Uterus (tissue), 4 donors: ENCODE measurements at regions of chr4 and their contacts with region 1.

Region 1: DNA sequence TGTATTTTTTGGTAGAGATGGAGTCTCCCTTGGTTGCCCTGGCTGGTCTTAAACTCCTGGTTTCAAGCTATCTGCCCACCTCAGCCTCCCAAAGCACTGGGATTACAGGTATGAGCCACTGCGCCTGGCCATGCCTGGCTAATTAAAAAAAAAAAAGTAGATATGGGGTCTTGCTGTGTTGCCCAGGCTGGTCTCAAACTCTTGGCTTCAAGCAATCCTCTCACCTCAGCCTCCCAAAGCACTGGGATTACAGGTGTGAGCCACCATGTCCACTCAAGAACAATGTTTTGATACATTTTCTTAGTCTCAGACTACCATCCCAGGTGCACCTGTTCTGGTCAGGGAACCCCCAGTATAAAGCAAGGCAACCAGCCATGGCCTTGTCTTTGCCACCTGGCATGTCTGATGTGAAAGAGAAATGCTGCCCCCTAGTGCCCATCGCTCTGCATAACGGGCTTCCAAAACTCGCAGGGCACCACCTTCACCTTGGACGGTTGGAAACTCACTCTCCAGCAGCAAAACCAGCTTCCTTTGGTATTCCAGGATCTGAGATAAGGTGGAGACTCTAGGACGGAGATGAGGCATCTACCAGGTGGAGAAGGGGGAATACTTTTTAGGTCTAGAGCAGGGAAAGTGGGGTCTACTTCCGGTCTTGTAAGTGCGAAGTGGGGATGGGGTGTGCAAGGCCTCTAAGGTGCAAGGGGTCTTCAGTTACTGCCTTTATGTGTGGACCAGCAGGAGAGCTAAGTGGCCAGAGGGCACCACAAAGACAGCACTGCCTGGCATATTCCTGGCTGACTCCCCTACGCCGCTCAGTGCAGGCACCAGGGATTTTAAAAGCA is 47.7 kb upstream of the AFAP1 start:
- DNase-seq: peak; percentile 63 to 73
- H3K4me3 ChIP-seq: no peak overlapping the region
- H3K27ac ChIP-seq: no peak overlapping the region
- H3K4me1 ChIP-seq: no peaks in the 10 kb centered on the region
- H3K27me3 ChIP-seq: no peaks in the 10 kb centered on the region
- CTCF ChIP-seq: peak; percentile 79 to 87 (median 84)
- POLR2A ChIP-seq: no peak

Region 2: GRCh38 chr4:7802093-7802726 is 185.2 kb before region 1 on chr4:
- intact Hi-C with region 1: loop called (anchors 5 kb)
- DNase-seq: peak; percentile 80 to 83
- H3K4me3 ChIP-seq: no peak overlapping the region
- H3K27ac ChIP-seq: no peak overlapping the region
- H3K4me1 ChIP-seq: peaks cover 4 to 8% of the 10 kb centered on the region in 2 donors
- H3K27me3 ChIP-seq: no peaks in the 10 kb centered on the region
- CTCF ChIP-seq: peak; percentile 88 to 92 (median 92)
- POLR2A ChIP-seq: no peak